ENCODE measurements at regions of chr17 and their contacts with region 1.

Region 1: GRCh38 chr17:75784473-75785015 is at the start of gene UNK:
- DNase-seq: peak; percentile 99
- H3K4me3 ChIP-seq: peak within 1 kb of the TSS; percentile 65 to 72
- H3K27ac ChIP-seq: peak within 1 kb of the TSS; percentile 98
- H3K4me1 ChIP-seq: peaks cover 16 to 20% of the 10 kb centered on the region in 2 experiments
- H3K27me3 ChIP-seq: no peaks in the 10 kb centered on the region
- CTCF ChIP-seq: no peak
- EP300 ChIP-seq: no peak
- RAD21 ChIP-seq: no peak
- polyA plus RNA-seq, gene UNK: 19.9 and 24.8 TPM in 2 replicates

Region 2: DNA sequence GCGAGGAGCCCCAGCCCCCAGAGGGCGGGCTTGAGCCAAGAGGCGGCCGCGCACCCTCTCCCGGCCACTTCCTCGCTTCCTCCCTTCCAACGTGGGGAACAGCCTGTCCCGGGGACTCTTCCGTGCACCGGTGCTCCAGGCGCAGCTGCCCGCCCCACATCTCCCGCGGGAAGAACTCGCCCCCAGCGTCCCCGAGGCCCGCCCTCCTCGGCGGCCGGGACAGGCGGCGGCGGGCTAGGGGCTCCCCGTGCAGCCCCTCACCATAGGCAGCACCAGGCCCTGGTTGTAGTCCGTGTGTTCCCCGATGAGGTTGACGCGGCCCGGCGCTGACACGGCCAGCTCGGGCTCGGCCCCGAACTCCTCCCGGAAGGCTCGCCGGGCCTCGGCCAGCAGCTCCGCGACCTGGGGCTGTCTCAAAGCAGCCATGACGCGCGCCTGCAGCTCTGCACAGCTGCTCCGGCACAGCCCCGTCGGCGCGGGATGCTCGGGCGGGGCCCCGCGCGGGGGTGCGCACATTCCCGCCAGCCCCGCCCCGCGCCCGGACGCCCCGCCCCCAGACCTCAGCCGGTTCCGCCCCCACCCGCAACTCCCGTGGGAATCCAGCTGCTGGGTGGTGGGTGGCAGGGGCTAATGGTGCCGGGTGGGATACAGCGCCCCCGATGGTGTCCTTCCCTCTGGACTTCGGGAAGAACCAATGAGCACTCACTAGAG is 19.7 kb before region 1 on chr17 and contains the start of gene GALK1:
- CTCF ChIA-PET with region 1: interaction called, 121 read pairs
- POLR2A ChIA-PET with region 1: interaction called, 32 read pairs
- DNase-seq: peak; percentile 98
- H3K4me3 ChIP-seq: peak within 1 kb of the TSS; percentile 58 to 92
- H3K27ac ChIP-seq: peak within 1 kb of the TSS; percentile 33 to 44; a peak in 3 of 4 replicates
- H3K4me1 ChIP-seq: peaks cover 8 to 19% of the 10 kb centered on the region in 2 experiments; a peak in 2 of 4 replicates
- H3K27me3 ChIP-seq: no peaks in the 10 kb centered on the region
- CTCF ChIP-seq: peak; percentile 38
- EP300 ChIP-seq: no peak
- RAD21 ChIP-seq: peak; percentile 49
- polyA plus RNA-seq, gene GALK1: 36.5 and 39.2 TPM in 2 replicates

Region 3: GRCh38 chr17:75814900-75815373 is 30.4 kb after region 1 on chr17:
- CTCF ChIA-PET with region 1: interaction called, 12 read pairs
- POLR2A ChIA-PET with region 1: interaction called, 4 read pairs
- DNase-seq: peak; percentile 47
- H3K4me3 ChIP-seq: no peak overlapping the region
- H3K27ac ChIP-seq: peak overlapping the region; percentile 29 to 63; a peak in 3 of 4 replicates
- H3K4me1 ChIP-seq: peaks cover 0 to 10% of the 10 kb centered on the region in 2 experiments; a peak in 3 of 4 replicates
- H3K27me3 ChIP-seq: no peaks in the 10 kb centered on the region
- CTCF ChIP-seq: no peak
- EP300 ChIP-seq: no peak
- RAD21 ChIP-seq: no peak

Region 4: GRCh38 chr17:75827252-75828115 is 42.9 kb after region 1 on chr17:
- CTCF ChIA-PET with region 1: interaction called, 120 read pairs
- POLR2A ChIA-PET with region 1: interaction called, 31 read pairs
- DNase-seq: peak; percentile 99
- H3K4me3 ChIP-seq: peak overlapping the region; percentile 18 to 37; a peak in 3 of 4 replicates
- H3K27ac ChIP-seq: peak overlapping the region; percentile 10 to 98; a peak in 3 of 4 replicates
- H3K4me1 ChIP-seq: peaks cover 5 to 33% of the 10 kb centered on the region in 2 experiments; a peak in 2 of 4 replicates
- H3K27me3 ChIP-seq: no peaks in the 10 kb centered on the region
- CTCF ChIP-seq: peak; percentile 81
- EP300 ChIP-seq: peak in 1 of 2 experiments; percentile 59; a peak in 3 of 4 replicates
- RAD21 ChIP-seq: peak; percentile 73

Region 5: DNA sequence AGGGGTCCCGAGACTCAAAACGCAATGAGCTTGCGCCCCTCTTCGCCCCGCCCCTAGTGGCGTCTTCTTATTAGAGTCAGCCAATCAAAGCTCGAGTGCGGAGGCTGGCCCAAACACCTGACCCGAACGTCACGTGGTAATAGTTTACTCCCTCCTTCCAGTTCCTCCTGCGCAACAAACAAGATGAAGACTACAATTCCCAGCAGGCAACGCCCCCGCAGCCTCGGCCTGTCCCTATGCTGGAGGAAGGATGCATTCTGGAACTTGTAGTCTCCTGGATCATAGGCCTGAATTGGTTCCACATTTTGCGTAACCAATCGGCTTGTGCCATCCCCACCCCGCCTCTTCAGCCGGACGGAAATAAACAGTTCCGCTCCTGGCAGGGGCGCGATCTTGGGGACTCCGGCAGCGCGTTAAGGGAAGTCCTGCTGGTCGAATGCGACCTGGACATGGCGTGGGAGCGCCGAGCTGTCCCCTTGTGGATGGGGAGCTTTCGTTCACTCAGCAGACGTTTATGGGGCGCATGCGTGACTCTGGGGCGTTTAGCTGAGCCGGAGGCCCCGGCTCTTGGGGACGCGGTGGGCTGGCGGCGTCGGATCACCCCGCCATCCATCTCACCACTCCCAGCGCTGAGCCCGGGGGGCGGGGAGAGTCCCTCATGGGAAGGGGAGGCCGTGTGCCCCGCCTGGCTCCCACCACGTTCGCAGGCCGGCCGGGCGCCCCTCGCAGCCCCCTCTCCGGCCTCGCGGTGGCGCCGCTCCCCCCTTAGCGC is 71.0 kb after region 1 on chr17 and contains the start of gene WBP2:
- CTCF ChIA-PET with region 1: interaction called, 16 read pairs
- POLR2A ChIA-PET with region 1: interaction called, 14 read pairs
- DNase-seq: peak; percentile 97
- H3K4me3 ChIP-seq: peak within 1 kb of the TSS; percentile 72 to 83
- H3K27ac ChIP-seq: peak within 1 kb of the TSS; percentile 86 to 88
- H3K4me1 ChIP-seq: peaks cover 12 to 19% of the 10 kb centered on the region in 2 experiments; a peak in 3 of 4 replicates
- H3K27me3 ChIP-seq: no peaks in the 10 kb centered on the region
- CTCF ChIP-seq: peak; percentile 70
- EP300 ChIP-seq: no peak
- RAD21 ChIP-seq: no peak; the same call in none of the 2 replicates
- polyA plus RNA-seq, gene WBP2: 49.7 and 55.8 TPM in 2 replicates

Region 6: DNA sequence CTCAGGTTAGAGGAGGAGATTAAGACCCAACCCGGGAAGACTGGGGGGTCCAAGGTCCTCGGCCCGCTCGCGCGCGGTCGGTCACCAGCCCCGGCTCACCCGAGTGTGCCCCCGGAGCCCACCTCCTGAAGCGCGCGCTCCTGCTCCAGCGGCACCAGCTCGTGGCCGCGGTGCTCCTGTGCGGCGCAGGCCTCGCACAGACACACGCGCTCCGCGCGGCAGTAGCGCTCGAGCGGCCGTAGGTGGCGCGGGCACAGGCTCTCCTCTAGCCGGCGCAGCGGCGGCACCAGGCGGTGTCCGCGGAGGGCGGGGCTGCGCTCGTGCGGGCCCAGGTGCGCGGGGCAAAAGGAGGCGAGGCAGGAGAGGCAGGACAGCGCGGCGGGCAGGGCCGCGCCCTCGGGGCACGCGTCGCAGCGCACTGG is 93.2 kb after region 1 on chr17:
- CTCF ChIA-PET with region 1: interaction called, 12 read pairs
- POLR2A ChIA-PET with region 1: interaction called, 4 read pairs
- DNase-seq: peak; percentile 93
- H3K4me3 ChIP-seq: peak overlapping the region; percentile 34 to 49
- H3K27ac ChIP-seq: peak overlapping the region in 1 of 2 experiments; percentile 87; a peak in 1 of 4 replicates
- H3K4me1 ChIP-seq: peaks cover 27 to 32% of the 10 kb centered on the region in 2 experiments; a peak in 3 of 4 replicates
- H3K27me3 ChIP-seq: no peaks in the 10 kb centered on the region
- CTCF ChIP-seq: peak; percentile 15; the same call in 1 of the 2 replicates
- EP300 ChIP-seq: no peak
- RAD21 ChIP-seq: peak; percentile 34; the same call in 1 of the 2 replicates

Region 7: DNA sequence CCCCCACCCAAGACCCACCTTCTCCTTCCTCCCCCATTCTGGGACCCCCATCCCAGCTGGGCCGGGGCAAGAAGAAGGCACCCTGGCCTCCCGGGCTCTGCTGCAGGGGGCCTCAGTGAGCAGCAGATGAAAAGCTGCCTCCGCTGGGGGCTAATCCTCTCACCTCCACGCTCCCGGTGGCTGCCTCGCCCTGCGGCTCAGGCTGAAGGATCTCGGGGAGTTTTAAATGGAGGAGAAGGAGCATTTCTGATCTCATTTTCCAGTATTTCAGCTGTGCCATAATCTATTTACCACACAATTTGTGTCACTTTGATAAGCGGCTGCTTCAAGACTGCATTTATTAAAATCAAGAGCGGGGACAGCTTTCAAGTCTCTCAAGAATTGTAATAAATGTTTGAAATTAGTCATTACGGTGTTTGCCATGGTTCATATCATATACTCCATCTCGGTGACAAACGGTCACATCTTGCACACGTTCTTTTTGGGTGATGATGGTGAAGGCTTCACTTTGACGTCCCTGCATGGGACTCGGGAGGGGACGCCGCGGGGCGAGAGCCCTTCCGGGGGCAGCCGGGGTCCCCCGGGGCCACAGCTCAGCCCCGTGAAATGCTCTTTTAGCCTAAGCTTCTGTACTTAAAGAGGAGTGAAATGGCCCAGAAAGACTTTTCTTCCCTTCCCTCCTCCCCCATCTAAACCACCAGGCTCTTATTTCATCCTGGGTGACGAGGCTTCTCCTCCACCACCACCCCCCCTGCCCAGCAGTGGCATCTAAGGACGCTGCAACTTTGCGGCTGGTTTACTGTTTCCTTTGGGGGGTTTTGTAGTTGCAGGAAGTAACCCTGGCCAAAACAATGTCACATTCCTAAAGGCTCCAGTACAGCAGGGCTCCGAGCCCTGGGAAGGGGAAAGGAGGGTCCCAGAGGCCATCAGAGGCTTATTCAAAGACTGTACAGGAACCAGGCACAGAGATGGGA is 1860.8 kb after region 1 on chr17:
- CTCF ChIA-PET with region 1: no interaction called
- POLR2A ChIA-PET with region 1: no interaction called
- DNase-seq: no peak
- H3K4me3 ChIP-seq: no peak overlapping the region
- H3K27ac ChIP-seq: no peak overlapping the region
- H3K4me1 ChIP-seq: peaks cover 0 to 17% of the 10 kb centered on the region in 2 experiments; a peak in 1 of 4 replicates
- H3K27me3 ChIP-seq: peaks cover 8% of the 10 kb centered on the region; the same call in 1 of the 2 replicates
- CTCF ChIP-seq: no peak
- EP300 ChIP-seq: no peak
- RAD21 ChIP-seq: 0 out of 2 replicates have a peak, but pooled peaks have one; percentile 4

Measured in SK-N-SH (cell line).